ENCODE measurements at regions of chr15 and their contacts with region 1.

Region 1: DNA sequence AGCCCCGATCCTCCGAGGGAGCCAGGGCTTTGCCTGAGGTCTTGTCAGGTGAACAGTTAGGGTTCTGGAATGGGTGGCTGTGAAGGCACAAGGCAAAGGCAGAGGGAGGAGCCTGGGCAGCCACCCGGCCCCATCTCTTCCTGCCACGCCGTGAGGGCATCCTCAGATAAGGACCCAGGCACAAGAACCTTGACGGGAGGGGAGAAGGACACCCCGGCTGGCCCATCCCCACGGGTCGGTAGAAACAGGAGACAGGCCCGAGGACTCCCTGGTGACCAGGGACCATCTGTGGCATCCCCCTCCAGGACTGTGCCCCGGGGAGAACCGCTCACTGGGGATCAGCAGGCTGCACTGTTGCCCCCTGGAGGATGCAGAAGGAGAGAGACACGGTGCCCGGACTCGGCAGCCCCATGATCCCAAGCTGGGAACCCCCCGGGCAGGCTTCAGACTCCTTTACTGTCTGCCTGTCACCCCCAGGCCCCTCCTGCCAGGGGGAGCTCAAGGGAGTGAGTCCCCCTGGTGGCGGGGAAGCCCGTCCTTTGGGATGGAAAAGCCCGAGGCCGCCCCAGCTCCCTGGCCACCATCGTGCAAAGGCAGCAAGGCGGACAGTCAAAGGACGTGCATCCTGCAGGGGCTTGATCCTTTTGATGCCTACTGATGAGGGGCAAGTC is 12.3 kb upstream of the PCSK6 start:
- DNase-seq: no peak
- H3K4me3 ChIP-seq: no peak overlapping the region
- H3K27ac ChIP-seq: no peak overlapping the region
- H3K4me1 ChIP-seq: no peaks in the 10 kb centered on the region
- H3K27me3 ChIP-seq: no peaks in the 10 kb centered on the region
- CTCF ChIP-seq: peak in 1 of 2 donors; percentile 36

Region 2: GRCh38 chr15:101320501-101321052 is 181.3 kb before region 1 on chr15:
- CTCF ChIA-PET with region 1: no interaction called
- dilution Hi-C with region 1: no loop called
- in situ Hi-C with region 1: loop called in 1 of 2 experiments (anchors 25 kb)
- intact Hi-C with region 1: no loop called
- DNase-seq: no peak
- H3K4me3 ChIP-seq: no peak overlapping the region
- H3K27ac ChIP-seq: no peak overlapping the region
- H3K4me1 ChIP-seq: peaks cover 20% of the 10 kb centered on the region
- H3K27me3 ChIP-seq: peaks cover 2% of the 10 kb centered on the region
- CTCF ChIP-seq: no peak

Region 3: GRCh38 chr15:101426881-101427280 is 75.0 kb before region 1 on chr15:
- CTCF ChIA-PET with region 1: no interaction called
- dilution Hi-C with region 1: no loop called
- in situ Hi-C with region 1: no loop called
- intact Hi-C with region 1: no loop called
- DNase-seq: no peak
- H3K4me3 ChIP-seq: no peak overlapping the region
- H3K27ac ChIP-seq: no peak overlapping the region
- H3K4me1 ChIP-seq: no peaks in the 10 kb centered on the region
- H3K27me3 ChIP-seq: no peaks in the 10 kb centered on the region
- CTCF ChIP-seq: no peak

Region 4: GRCh38 chr15:101445562-101446517 is 56.0 kb before region 1 on chr15:
- CTCF ChIA-PET with region 1: no interaction called
- dilution Hi-C with region 1: no loop called
- in situ Hi-C with region 1: loop called in 1 of 2 experiments (anchors 10 kb)
- intact Hi-C with region 1: no loop called
- DNase-seq: peak; percentile 63
- H3K4me3 ChIP-seq: no peak overlapping the region
- H3K27ac ChIP-seq: no peak overlapping the region
- H3K4me1 ChIP-seq: no peaks in the 10 kb centered on the region
- H3K27me3 ChIP-seq: no peaks in the 10 kb centered on the region
- CTCF ChIP-seq: no peak

Region 5: GRCh38 chr15:101578437-101578894 is 76.6 kb after region 1 on chr15:
- CTCF ChIA-PET with region 1: no interaction called
- dilution Hi-C with region 1: no loop called
- in situ Hi-C with region 1: no loop called
- intact Hi-C with region 1: loop called (anchors 5 kb)
- DNase-seq: peak; percentile 28
- H3K4me3 ChIP-seq: no peak overlapping the region
- H3K27ac ChIP-seq: no peak overlapping the region
- H3K4me1 ChIP-seq: peaks cover 5% of the 10 kb centered on the region
- H3K27me3 ChIP-seq: no peaks in the 10 kb centered on the region
- CTCF ChIP-seq: peak; percentile 55 to 77

Region 6: GRCh38 chr15:101841656-101842055 is 339.8 kb after region 1 on chr15:
- CTCF ChIA-PET with region 1: no interaction called
- dilution Hi-C with region 1: no loop called
- in situ Hi-C with region 1: no loop called
- intact Hi-C with region 1: no loop called
- DNase-seq: no peak
- H3K4me3 ChIP-seq: no peak overlapping the region
- H3K27ac ChIP-seq: no peak overlapping the region
- H3K4me1 ChIP-seq: no peaks in the 10 kb centered on the region
- H3K27me3 ChIP-seq: no peaks in the 10 kb centered on the region
- CTCF ChIP-seq: no peak